ENCODE measurements at regions of chr2 and their contacts with region 1.

Region 1: GRCh38 chr2:99154643-99155536 is at the starts of genes LIPT1 and TSGA10:
- DNase-seq: peak; percentile 89
- H3K4me3 Mint-ChIP-seq: no peak within 1 kb of the TSS
- H3K27ac Mint-ChIP-seq: peak within 1 kb of the TSS; percentile 95
- H3K4me1 Mint-ChIP-seq: peaks cover 31% of the 10 kb centered on the region
- H3K27me3 Mint-ChIP-seq: no peaks in the 10 kb centered on the region
- CTCF ChIP-seq: no peak
- total RNA-seq, gene LIPT1: 13.1 TPM in 2 replicates
- total RNA-seq, gene TSGA10: 7.9 and 11.6 TPM in 2 replicates

Region 2: GRCh38 chr2:98819231-98819766 is 335.6 kb before region 1 on chr2:
- CTCF ChIA-PET with region 1: no interaction called
- POLR2A ChIA-PET with region 1: no interaction called
- intact Hi-C with region 1: no loop called
- DNase-seq: no peak
- H3K4me3 Mint-ChIP-seq: no peak overlapping the region
- H3K27ac Mint-ChIP-seq: no peak overlapping the region
- H3K4me1 Mint-ChIP-seq: no peaks in the 10 kb centered on the region
- H3K27me3 Mint-ChIP-seq: no peaks in the 10 kb centered on the region
- CTCF ChIP-seq: no peak

Region 3: DNA sequence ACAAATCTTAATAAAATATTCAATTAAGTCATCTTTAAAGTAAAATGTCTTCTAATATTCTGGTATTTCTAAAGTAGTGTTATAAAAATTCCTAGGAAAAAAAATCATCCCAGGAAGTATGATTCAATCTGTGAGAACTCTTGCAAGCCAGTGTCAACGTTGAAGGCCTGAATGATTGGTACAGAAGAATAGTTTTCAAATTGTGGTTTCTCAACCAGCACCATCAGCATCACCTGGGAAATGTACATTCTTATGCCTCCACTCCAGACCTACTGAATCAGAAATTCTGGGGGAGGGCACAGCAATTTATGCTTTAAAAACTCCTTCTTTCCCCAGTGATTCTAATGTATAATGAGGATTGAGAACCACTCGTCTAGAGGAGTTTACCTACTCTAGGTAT is 75.7 kb before region 1 on chr2:
- CTCF ChIA-PET with region 1: no interaction called
- POLR2A ChIA-PET with region 1: no interaction called
- intact Hi-C with region 1: loop called (anchors 2 kb)
- DNase-seq: peak; percentile 16
- H3K4me3 Mint-ChIP-seq: no peak overlapping the region
- H3K27ac Mint-ChIP-seq: no peak overlapping the region
- H3K4me1 Mint-ChIP-seq: peaks cover 7% of the 10 kb centered on the region
- H3K27me3 Mint-ChIP-seq: no peaks in the 10 kb centered on the region
- CTCF ChIP-seq: no peak

Region 4: GRCh38 chr2:99141110-99142108 is 13.5 kb before region 1 on chr2 and contains the start of gene C2orf15:
- CTCF ChIA-PET with region 1: interaction called, 3 read pairs
- POLR2A ChIA-PET with region 1: interaction called, 139 read pairs
- intact Hi-C with region 1: loop called (anchors 1 kb)
- DNase-seq: peak; percentile 95
- H3K4me3 Mint-ChIP-seq: peak within 1 kb of the TSS; percentile 99
- H3K27ac Mint-ChIP-seq: peak within 1 kb of the TSS; percentile 92
- H3K4me1 Mint-ChIP-seq: peaks cover 8% of the 10 kb centered on the region
- H3K27me3 Mint-ChIP-seq: no peaks in the 10 kb centered on the region
- CTCF ChIP-seq: no peak
- total RNA-seq, gene C2orf15: 0.74 and 0.93 TPM in 2 replicates

Region 5: DNA sequence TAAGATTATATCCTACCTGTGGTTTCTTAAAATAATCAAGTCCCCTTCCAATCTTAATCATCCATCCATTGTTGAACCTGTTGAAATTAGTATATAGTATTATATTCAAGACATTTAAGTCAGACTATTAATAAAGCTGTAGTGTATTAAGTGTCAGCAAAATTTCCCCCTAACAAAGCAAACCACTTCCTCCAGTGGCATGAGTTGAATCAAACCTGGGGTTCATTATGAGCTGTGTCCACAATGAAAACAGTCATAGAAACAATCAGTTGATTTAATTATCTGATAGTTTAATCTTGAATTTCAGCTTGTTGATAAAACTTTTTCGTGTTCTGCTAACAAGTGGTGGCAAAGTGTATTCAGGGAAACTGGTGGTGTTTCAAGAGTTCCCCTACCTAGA is 14.6 kb after region 1 on chr2:
- CTCF ChIA-PET with region 1: interaction called, 5 read pairs
- POLR2A ChIA-PET with region 1: interaction called, 18 read pairs
- intact Hi-C with region 1: no loop called
- DNase-seq: no peak
- H3K4me3 Mint-ChIP-seq: no peak overlapping the region
- H3K27ac Mint-ChIP-seq: no peak overlapping the region
- H3K4me1 Mint-ChIP-seq: no peaks in the 10 kb centered on the region
- H3K27me3 Mint-ChIP-seq: no peaks in the 10 kb centered on the region
- CTCF ChIP-seq: no peak

Region 6: GRCh38 chr2:99180755-99181623 is 26.1 kb after region 1 on chr2 and contains the starts of genes MITD1 and MRPL30:
- CTCF ChIA-PET with region 1: interaction called, 5 read pairs
- POLR2A ChIA-PET with region 1: interaction called, 100 read pairs
- intact Hi-C with region 1: loop called (anchors 2 kb)
- DNase-seq: peak; percentile 96
- H3K4me3 Mint-ChIP-seq: peak within 1 kb of the TSS; percentile 87
- H3K27ac Mint-ChIP-seq: peak within 1 kb of the TSS; percentile 86
- H3K4me1 Mint-ChIP-seq: peaks cover 30% of the 10 kb centered on the region
- H3K27me3 Mint-ChIP-seq: no peaks in the 10 kb centered on the region
- CTCF ChIP-seq: no peak
- total RNA-seq, gene MITD1: 19.1 and 21.2 TPM in 2 replicates
- total RNA-seq, gene MRPL30: 39.1 and 42.5 TPM in 2 replicates

Region 7: GRCh38 chr2:99217929-99218501 is 63.1 kb after region 1 on chr2:
- CTCF ChIA-PET with region 1: no interaction called
- POLR2A ChIA-PET with region 1: no interaction called
- intact Hi-C with region 1: no loop called
- DNase-seq: no peak
- H3K4me3 Mint-ChIP-seq: no peak overlapping the region
- H3K27ac Mint-ChIP-seq: no peak overlapping the region
- H3K4me1 Mint-ChIP-seq: no peaks in the 10 kb centered on the region
- H3K27me3 Mint-ChIP-seq: no peaks in the 10 kb centered on the region
- CTCF ChIP-seq: no peak

Region 8: GRCh38 chr2:99572373-99573164 is 417.7 kb after region 1 on chr2:
- CTCF ChIA-PET with region 1: no interaction called
- POLR2A ChIA-PET with region 1: no interaction called
- intact Hi-C with region 1: no loop called
- DNase-seq: peak; percentile 3
- H3K4me3 Mint-ChIP-seq: no peak overlapping the region
- H3K27ac Mint-ChIP-seq: no peak overlapping the region
- H3K4me1 Mint-ChIP-seq: no peaks in the 10 kb centered on the region
- H3K27me3 Mint-ChIP-seq: no peaks in the 10 kb centered on the region
- CTCF ChIP-seq: no peak

Measured in MCF 10A (cell line).